Calu3 (cell line): ENCODE measurements at regions of chr1 and their contacts with region 1.

Region 1: GRCh38 chr1:85612704-85613361 is 32.3 kb downstream of the CCN1 start:
- DNase-seq: peak; percentile 58
- H3K4me3 Mint-ChIP-seq: peak overlapping the region; percentile 29
- H3K27ac Mint-ChIP-seq: peak overlapping the region; percentile 93
- H3K4me1 Mint-ChIP-seq: peaks cover 68% of the 10 kb centered on the region
- H3K27me3 Mint-ChIP-seq: no peaks in the 10 kb centered on the region
- CTCF ChIP-seq: peak; percentile 58

Region 2: GRCh38 chr1:85584264-85584781 is 28.5 kb before region 1 on chr1:
- CTCF ChIA-PET with region 1: interaction called, 10 read pairs
- intact Hi-C with region 1: loop called (anchors 1 kb)
- DNase-seq: no peak
- H3K4me3 Mint-ChIP-seq: peak overlapping the region; percentile 36
- H3K27ac Mint-ChIP-seq: peak overlapping the region; percentile 85
- H3K4me1 Mint-ChIP-seq: peaks cover 34% of the 10 kb centered on the region
- H3K27me3 Mint-ChIP-seq: no peaks in the 10 kb centered on the region
- CTCF ChIP-seq: no peak

Region 3: GRCh38 chr1:85692730-85693314 is 80.0 kb after region 1 on chr1:
- CTCF ChIA-PET with region 1: interaction called, 39 read pairs
- intact Hi-C with region 1: no loop called
- DNase-seq: no peak
- H3K4me3 Mint-ChIP-seq: no peak overlapping the region
- H3K27ac Mint-ChIP-seq: peak overlapping the region; percentile 78
- H3K4me1 Mint-ChIP-seq: peaks cover 32% of the 10 kb centered on the region
- H3K27me3 Mint-ChIP-seq: no peaks in the 10 kb centered on the region
- CTCF ChIP-seq: no peak